ENCODE measurements at regions of chr7 and their contacts with region 1.

Region 1: DNA sequence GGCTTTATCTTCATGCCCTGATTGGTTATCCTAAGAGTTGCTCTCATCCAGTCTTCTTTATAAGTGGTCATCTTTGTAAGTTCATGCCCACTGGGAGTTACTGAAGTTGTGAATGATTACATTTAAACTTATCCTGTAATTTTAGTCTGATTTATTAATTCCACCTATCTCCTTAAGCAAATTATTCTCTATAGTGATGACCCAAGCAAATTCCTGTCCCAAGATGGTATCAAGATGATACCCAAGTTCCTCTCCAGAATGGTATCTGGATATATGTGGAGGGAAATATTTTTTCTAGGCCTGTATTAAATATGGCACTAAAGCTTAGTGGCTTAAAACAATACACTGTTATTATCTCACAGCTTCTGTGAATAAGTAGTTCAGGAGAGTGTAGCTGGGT is 22.6 kb upstream of the VOPP1 start:
- DNase-seq: no peak
- H3K4me3 ChIP-seq: no peak overlapping the region
- H3K27ac ChIP-seq: no peak overlapping the region
- H3K4me1 ChIP-seq: no peaks in the 10 kb centered on the region
- H3K27me3 ChIP-seq: no peaks in the 10 kb centered on the region
- CTCF ChIP-seq: no peak

Region 2: GRCh38 chr7:55280031-55280454 is 314.8 kb before region 1 on chr7:
- intact Hi-C with region 1: loop called (anchors 5 kb)
- DNase-seq: peak in 1 of 2 donors; percentile 67
- H3K4me3 ChIP-seq: no peak overlapping the region
- H3K27ac ChIP-seq: no peak overlapping the region
- H3K4me1 ChIP-seq: no peaks in the 10 kb centered on the region
- H3K27me3 ChIP-seq: no peaks in the 10 kb centered on the region
- CTCF ChIP-seq: peak; percentile 40 to 67 (median 45)

Region 3: DNA sequence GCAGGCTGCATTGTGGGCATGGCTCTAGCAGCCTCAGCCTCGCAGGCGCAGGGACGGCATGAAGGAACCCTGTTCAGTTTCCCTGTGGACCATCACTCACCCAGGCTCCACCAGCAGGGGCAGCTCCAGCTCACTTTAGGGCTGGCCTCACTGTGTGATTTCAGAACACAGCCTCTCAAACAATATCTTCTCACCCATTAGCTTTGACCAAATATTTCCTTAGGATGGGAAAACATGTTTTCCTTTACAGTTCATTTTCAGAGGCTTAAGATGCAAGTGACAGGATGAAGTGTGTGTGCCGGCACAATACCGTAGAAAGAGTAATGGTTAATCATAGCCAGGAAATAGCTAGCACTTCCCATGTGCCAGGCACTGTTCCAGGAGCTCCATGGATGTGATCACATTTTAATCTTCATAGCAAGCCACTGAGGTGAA is 171.6 kb before region 1 on chr7:
- intact Hi-C with region 1: no loop called
- DNase-seq: no peak
- H3K4me3 ChIP-seq: no peak overlapping the region
- H3K27ac ChIP-seq: no peak overlapping the region
- H3K4me1 ChIP-seq: no peaks in the 10 kb centered on the region
- H3K27me3 ChIP-seq: no peaks in the 10 kb centered on the region
- CTCF ChIP-seq: no peak

Region 4: GRCh38 chr7:55526770-55527169 is 68.1 kb before region 1 on chr7:
- intact Hi-C with region 1: loop called (anchors 5 kb)
- DNase-seq: no peak
- H3K4me3 ChIP-seq: no peak overlapping the region
- H3K27ac ChIP-seq: no peak overlapping the region
- H3K4me1 ChIP-seq: peaks cover 13 to 20% of the 10 kb centered on the region in 2 donors
- H3K27me3 ChIP-seq: no peaks in the 10 kb centered on the region
- CTCF ChIP-seq: no peak